Aorta (tissue), 5 donors: ENCODE measurements at regions of chr17 and their contacts with region 1.

Region 1: DNA sequence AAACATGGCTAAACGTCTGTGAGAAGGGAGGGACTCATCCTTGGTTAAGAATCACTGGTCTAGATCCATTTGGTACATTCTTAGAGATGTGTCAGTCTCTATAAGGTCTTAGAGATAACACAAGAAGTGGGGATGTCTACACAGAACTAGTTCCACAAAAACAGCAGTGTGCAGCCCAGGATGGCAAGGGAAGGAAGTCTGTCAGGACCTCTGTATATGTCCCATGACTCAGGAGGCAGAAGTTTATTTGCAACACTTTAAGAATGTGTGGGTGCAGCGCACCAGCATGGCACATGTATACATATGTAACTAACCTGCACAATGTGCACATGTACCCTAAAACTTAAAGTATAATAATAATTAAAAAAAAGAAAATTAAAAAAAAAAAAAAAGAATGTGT is 548.5 kb upstream of the SOX9 start:
- DNase-seq: no peak
- ATAC-seq: no peak
- H3K4me3 ChIP-seq: no peak overlapping the region
- H3K27ac ChIP-seq: no peak overlapping the region
- H3K4me1 ChIP-seq: no peaks in the 10 kb centered on the region
- H3K27me3 ChIP-seq: no peaks in the 10 kb centered on the region

Region 2: GRCh38 chr17:71593078-71593477 is 20.7 kb after region 1 on chr17:
- intact Hi-C with region 1: no loop called
- DNase-seq: no peak
- ATAC-seq: no peak
- H3K4me3 ChIP-seq: no peak overlapping the region
- H3K27ac ChIP-seq: no peak overlapping the region
- H3K4me1 ChIP-seq: no peaks in the 10 kb centered on the region
- H3K27me3 ChIP-seq: peaks cover 0 to 2% of the 10 kb centered on the region in 2 donors

Region 3: GRCh38 chr17:71628306-71628705 is 56.0 kb after region 1 on chr17:
- intact Hi-C with region 1: loop called in 1 of 2 experiments (anchors 10 kb)
- DNase-seq: no peak
- ATAC-seq: no peak
- H3K4me3 ChIP-seq: no peak overlapping the region
- H3K27ac ChIP-seq: no peak overlapping the region
- H3K4me1 ChIP-seq: no peaks in the 10 kb centered on the region
- H3K27me3 ChIP-seq: no peaks in the 10 kb centered on the region

Region 4: DNA sequence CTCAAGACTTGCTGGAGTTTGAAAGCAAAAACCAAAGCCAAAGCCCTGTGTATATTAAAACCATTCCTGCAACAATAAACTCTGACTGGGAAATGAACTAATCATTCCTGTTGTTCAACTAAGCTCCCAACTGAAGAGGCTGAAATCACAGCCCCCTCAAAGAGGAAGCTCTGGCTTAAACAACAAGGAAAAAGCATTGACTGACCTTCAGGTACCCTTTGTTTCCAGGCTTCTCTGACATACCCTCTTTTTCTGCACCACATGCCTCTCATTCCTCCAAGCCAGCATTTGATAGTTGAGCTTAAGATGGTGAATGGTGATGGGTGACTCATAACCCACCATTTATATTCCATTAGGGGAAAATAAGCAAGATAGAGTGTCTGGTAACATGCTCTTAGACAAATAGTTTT is 77.6 kb after region 1 on chr17:
- intact Hi-C with region 1: no loop called
- DNase-seq: no peak
- ATAC-seq: no peak
- H3K4me3 ChIP-seq: no peak overlapping the region
- H3K27ac ChIP-seq: no peak overlapping the region
- H3K4me1 ChIP-seq: no peaks in the 10 kb centered on the region
- H3K27me3 ChIP-seq: no peaks in the 10 kb centered on the region